ENCODE measurements at regions of chr1 and their contacts with region 1.

Region 1: DNA sequence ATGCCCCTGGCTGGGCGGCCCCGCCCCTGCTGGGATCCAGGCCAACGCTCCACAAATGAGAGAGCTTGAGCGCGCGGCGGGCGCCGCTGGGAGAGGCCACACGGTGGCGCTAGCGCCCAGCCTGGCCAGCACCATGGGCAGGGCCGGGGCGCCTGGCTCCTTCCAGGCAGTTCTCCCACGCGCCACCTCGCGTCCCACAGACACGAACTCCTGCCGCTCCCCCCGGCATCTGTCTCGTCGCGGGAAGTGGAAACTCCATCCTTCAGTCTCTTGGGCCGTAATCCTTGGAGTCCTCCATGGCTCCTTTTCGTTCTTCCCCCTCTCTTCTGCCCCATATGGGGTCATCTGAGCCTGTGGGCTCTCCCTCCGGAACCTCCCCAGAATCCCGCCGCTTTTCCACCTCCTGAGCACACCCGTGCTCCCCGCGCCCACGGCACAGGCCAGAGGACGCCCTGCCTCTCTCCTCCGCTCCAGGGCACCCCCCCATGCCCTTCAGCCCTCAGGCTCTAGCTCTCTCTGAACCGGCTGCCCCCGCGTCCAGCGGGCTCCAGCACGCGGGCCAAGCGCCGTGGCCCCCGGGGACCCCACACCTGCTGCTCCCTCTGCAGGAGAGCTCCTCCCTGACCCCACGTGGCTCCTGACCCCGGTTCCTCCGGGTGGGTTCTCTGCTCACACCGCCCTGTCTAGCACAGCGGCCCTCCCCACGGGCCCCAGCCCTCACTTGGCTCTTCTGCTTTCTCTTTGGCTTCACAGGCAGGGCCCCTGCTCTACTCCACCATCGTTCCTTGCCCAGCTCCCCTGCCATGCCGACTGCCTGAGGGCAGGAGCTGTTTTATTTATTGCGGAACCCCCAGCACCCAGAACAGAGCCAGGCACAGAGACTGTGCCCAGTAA is 31.9 kb upstream of the EDN2 start:
- DNase-seq: peak; percentile 91
- H3K4me3 ChIP-seq: peak overlapping the region in 2 of 3 experiments; percentile 13 to 14
- H3K27ac ChIP-seq: no peak overlapping the region
- H3K4me1 ChIP-seq: peaks cover 4% of the 10 kb centered on the region
- H3K27me3 ChIP-seq: no peaks in the 10 kb centered on the region
- CTCF ChIP-seq: peak; percentile 94 to 99
- POLR2A ChIP-seq: no peak

Region 2: GRCh38 chr1:41268154-41268770 is 248.2 kb before region 1 on chr1:
- CTCF ChIA-PET with region 1: interaction called, 7 read pairs
- POLR2A ChIA-PET with region 1: no interaction called
- dilution Hi-C with region 1: no loop called
- intact Hi-C with region 1: loop called (anchors 1 kb)
- DNase-seq: peak; percentile 68
- H3K4me3 ChIP-seq: no peak overlapping the region
- H3K27ac ChIP-seq: no peak overlapping the region
- H3K4me1 ChIP-seq: no peaks in the 10 kb centered on the region
- H3K27me3 ChIP-seq: peaks cover 0 to 9% of the 10 kb centered on the region in 2 experiments
- CTCF ChIP-seq: peak; percentile 95 to 97
- POLR2A ChIP-seq: no peak

Region 3: GRCh38 chr1:41322835-41323627 is 193.4 kb before region 1 on chr1:
- CTCF ChIA-PET with region 1: interaction called, 10 read pairs
- POLR2A ChIA-PET with region 1: no interaction called
- dilution Hi-C with region 1: no loop called
- intact Hi-C with region 1: no loop called
- DNase-seq: peak; percentile 24
- H3K4me3 ChIP-seq: no peak overlapping the region
- H3K27ac ChIP-seq: no peak overlapping the region
- H3K4me1 ChIP-seq: no peaks in the 10 kb centered on the region
- H3K27me3 ChIP-seq: no peaks in the 10 kb centered on the region
- CTCF ChIP-seq: peak; percentile 53 to 62
- POLR2A ChIP-seq: no peak

Region 4: DNA sequence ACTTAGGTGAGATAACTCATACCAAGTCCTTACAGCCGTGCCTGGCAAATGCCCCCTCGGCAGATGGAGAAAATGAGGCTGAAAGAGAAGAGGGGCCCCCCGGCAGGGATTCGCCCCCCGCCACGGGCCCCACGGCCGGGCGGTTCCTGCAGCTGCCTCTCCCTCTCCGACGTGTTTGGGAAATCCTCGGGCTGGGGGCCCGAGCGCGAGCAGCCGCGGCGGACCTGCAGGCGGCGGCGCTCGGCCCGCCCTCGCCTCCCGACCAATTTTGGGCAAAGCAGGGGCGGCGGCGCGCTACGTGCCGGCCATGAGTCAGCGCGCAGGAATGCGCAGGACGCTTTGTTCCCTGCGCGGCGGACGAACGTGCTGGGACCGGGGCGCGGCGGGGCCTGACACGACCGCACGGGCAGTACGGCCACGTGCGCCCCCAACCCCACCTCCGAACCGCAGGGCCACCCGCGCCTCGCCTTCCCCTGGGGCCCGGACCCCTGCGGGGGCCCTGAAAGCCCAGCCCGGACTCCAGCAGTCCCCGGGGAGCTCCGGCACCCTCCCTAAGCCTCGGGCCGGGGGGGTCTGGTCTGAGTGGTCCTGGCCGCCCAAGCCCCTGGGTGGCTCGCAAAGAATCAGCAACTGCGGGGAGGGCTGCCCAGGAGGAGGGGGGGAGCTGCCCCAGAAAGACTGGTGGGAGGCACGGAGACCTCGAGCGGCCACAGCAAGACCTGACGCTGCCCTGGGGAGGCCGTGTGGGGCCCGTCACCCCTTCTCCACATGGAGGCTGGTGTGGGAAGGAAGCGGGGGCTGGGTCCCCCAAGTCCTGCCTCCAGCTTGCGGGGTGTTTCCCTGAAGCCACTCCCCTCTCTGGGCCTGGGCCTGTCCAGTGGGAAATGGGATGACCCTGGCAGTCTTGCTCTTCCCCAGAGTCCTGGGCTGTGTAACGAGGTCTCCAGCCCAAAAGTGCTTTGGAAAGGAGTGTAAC is 20.0 kb before region 1 on chr1:
- CTCF ChIA-PET with region 1: interaction called, 33 read pairs
- POLR2A ChIA-PET with region 1: interaction called, 3 read pairs
- dilution Hi-C with region 1: no loop called
- intact Hi-C with region 1: loop called (anchors 1 kb)
- DNase-seq: peak; percentile 60
- H3K4me3 ChIP-seq: peak overlapping the region in 2 of 3 experiments; percentile 12 to 27
- H3K27ac ChIP-seq: peak overlapping the region; percentile 88
- H3K4me1 ChIP-seq: peaks cover 22% of the 10 kb centered on the region
- H3K27me3 ChIP-seq: no peaks in the 10 kb centered on the region
- CTCF ChIP-seq: no peak
- POLR2A ChIP-seq: no peak

Region 5: DNA sequence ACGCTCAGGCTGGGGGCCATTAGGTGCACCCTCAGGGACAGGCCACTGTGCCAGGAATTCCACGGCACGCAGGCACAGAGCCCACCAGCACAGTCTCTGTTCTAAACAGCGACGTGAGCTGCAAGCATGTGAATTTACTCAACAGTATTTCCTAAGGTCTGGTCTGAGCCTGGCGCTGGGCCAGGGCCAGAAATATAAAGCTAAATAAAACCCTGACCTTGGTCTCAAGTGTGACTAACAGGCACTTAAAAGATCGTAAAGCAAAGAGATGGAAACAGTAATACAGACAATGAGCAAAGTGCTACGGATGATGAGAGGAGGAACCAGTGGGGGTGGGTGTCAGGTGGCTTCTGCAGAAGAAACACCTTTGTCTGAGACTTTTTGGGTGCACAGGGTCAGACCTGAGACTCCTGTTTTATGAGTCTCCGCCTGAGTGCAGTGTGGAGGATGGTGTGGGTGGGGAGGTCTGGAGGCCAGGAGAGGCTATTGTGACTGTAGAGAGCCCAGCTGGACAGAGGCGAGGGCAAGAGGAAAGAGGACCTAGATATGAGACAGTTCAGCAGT is 21.5 kb after region 1 on chr1:
- CTCF ChIA-PET with region 1: interaction called, 13 read pairs
- POLR2A ChIA-PET with region 1: no interaction called
- dilution Hi-C with region 1: no loop called
- intact Hi-C with region 1: loop called (anchors 2 kb)
- DNase-seq: peak; percentile 82
- H3K4me3 ChIP-seq: no peak overlapping the region
- H3K27ac ChIP-seq: no peak overlapping the region
- H3K4me1 ChIP-seq: peaks cover 5% of the 10 kb centered on the region
- H3K27me3 ChIP-seq: no peaks in the 10 kb centered on the region
- CTCF ChIP-seq: no peak
- POLR2A ChIP-seq: no peak

Region 6: GRCh38 chr1:41547781-41548560 is 31.6 kb after region 1 on chr1:
- CTCF ChIA-PET with region 1: no interaction called
- POLR2A ChIA-PET with region 1: no interaction called
- dilution Hi-C with region 1: no loop called
- intact Hi-C with region 1: no loop called
- DNase-seq: no peak
- H3K4me3 ChIP-seq: no peak overlapping the region
- H3K27ac ChIP-seq: no peak overlapping the region
- H3K4me1 ChIP-seq: no peaks in the 10 kb centered on the region
- H3K27me3 ChIP-seq: no peaks in the 10 kb centered on the region
- CTCF ChIP-seq: no peak
- POLR2A ChIP-seq: no peak

Region 7: DNA sequence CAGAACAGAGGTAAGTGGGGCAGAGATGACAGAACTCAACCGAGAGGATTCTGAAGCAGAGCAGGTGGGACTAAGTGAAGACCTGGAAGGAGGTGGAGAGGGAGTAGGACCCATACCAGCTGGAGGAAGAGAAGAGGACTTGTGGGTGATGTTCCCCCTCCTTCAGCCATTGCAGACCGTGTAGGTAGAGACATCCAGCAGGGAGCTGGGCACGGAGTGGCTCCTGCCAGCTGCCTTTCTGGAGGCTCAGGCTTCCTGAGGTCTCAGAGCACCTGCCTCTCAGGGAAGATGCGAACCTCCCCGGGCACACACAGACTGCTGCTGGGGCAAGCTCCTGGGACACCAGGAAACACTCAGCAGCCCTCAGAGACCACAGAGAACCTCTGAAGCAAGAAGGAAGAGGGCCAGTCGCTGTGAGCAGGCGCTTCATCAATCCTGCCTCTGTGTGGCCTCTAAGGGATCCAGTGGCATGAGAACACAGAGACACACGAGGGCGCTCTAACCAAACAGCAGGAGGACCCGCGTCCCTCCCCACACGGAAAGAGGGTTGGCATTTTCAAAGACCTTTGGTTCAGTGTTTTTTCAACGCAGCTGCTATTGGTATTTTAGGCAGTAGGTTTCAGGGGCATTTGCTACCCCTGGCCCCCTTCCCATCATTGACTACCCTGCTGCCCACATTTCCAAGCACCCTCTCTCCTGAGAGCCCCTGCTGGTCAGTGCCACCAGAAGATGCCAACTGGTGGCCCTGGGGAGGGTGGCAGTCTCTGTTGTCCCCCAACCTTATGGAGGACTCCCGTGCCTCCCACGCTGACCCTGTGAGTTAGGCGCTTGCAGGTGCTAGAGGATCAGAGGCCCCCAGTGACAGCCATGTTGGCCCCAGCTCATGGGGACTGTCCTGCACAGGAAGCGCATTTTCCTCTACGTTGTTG is 57.6 kb after region 1 on chr1:
- CTCF ChIA-PET with region 1: interaction called, 6 read pairs
- POLR2A ChIA-PET with region 1: no interaction called
- dilution Hi-C with region 1: no loop called
- intact Hi-C with region 1: loop called (anchors 2 kb)
- DNase-seq: peak; percentile 65
- H3K4me3 ChIP-seq: no peak overlapping the region
- H3K27ac ChIP-seq: no peak overlapping the region
- H3K4me1 ChIP-seq: no peaks in the 10 kb centered on the region
- H3K27me3 ChIP-seq: no peaks in the 10 kb centered on the region
- CTCF ChIP-seq: peak; percentile 80 to 90
- POLR2A ChIP-seq: no peak

Region 8: DNA sequence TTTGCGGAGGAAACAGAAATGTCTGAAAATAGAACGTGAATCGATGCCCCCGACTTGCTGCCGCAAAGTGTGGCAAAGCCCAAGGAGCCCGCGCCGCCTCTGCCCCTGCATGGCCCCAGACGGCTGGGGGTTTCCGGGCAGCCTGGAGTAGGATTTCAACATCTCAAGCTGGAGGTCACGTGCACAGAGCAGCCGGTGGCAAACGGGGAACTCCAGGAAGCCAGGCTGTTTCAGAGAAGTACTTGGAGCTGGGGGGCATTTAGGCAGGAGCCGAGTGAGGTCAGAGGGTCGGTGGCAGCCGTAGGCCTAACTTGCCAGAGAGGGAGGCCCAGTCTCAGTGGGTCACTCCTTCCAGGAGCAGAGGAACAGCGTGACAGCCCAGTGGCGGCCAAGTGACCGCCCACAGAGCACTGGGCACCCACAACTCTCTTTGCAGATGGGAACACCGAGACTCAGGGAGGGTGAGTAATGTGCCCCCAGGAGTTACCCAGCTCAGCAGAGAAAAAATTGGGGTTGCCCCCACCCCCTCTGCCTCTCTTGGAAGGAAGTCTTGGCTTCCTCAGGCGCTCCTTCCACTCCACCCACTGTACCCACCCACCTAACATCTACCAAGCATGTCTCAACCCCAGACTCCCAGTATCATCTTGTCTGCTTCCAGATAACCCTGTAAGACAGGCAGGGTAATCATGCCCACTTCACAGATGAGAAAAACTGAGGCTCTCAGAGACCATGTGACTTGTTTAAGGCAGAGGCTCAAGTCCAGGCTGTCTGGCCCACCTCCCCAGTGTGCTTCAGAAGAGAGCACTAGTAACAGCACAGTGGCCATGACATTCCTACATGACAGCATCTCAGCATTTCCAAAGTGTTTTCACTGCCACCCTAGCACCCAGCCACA is 222.9 kb after region 1 on chr1:
- CTCF ChIA-PET with region 1: no interaction called
- POLR2A ChIA-PET with region 1: no interaction called
- dilution Hi-C with region 1: no loop called
- intact Hi-C with region 1: no loop called
- DNase-seq: peak; percentile 68
- H3K4me3 ChIP-seq: no peak overlapping the region
- H3K27ac ChIP-seq: no peak overlapping the region
- H3K4me1 ChIP-seq: peaks cover 7% of the 10 kb centered on the region
- H3K27me3 ChIP-seq: no peaks in the 10 kb centered on the region
- CTCF ChIP-seq: no peak
- POLR2A ChIP-seq: no peak

Region 9: DNA sequence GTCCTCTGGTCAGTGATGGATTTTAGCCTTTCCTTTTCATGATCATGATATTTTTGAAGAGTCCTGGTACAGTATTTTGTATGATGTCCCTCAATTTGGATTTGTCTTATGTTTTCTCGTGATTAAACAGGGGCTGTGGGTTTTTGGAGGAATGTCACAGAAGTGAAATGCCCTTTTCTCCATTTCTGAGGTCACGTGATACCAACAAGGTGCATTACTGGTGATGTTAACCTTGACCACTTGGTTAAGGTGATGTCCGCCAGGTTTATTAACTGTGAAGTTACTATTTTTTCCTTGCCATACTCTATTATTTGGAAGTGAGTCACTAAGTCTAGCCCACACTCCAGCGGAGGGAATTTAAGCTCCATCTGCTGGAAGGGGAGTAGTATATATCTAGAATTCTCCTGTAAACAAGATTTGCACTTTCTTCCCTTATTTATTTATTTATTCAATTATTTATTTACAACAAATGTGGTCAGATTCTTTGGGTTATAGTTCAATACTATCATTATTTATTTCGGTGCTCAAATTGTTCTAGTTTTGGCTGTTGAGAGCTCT is 278.9 kb after region 1 on chr1:
- CTCF ChIA-PET with region 1: interaction called, 3 read pairs
- POLR2A ChIA-PET with region 1: no interaction called
- dilution Hi-C with region 1: no loop called
- intact Hi-C with region 1: loop called (anchors 1 kb)
- DNase-seq: peak; percentile 43
- H3K4me3 ChIP-seq: no peak overlapping the region
- H3K27ac ChIP-seq: no peak overlapping the region
- H3K4me1 ChIP-seq: no peaks in the 10 kb centered on the region
- H3K27me3 ChIP-seq: peaks cover 0 to 2% of the 10 kb centered on the region in 2 experiments
- CTCF ChIP-seq: peak in 1 of 2 donors; percentile 22
- POLR2A ChIP-seq: no peak